Heart right ventricle (tissue), 16 donors: ENCODE measurements at regions of chr9 and their contacts with region 1.

Region 1: DNA sequence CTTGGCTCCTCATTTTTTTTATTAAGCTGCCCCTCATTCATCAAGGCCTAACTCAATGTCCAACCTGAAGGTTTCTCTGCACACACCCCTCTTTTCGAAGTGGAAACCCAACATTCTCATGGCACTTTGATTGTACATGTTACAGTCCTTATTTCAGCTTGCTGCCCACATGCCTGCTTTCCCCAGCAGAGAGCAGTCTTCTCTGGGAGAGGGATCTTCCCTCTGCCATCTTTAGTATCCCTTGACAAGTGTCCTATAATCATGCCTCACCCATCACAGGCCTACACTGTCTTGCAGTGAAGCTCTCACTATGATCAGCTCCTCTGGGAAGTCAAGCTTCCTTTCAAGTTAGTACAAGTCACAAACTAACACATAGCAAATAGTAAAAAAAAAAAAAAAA is 175.1 kb downstream of the ACER2 start:
- DNase-seq: no peak
- ATAC-seq: no peak
- H3K4me3 ChIP-seq: no peak overlapping the region
- H3K27ac ChIP-seq: no peak overlapping the region
- H3K4me1 ChIP-seq: no peaks in the 10 kb centered on the region
- H3K27me3 ChIP-seq: no peaks in the 10 kb centered on the region
- CTCF ChIP-seq: no peak

Region 2: GRCh38 chr9:19184144-19184917 is 399.6 kb before region 1 on chr9:
- intact Hi-C with region 1: no loop called
- DNase-seq: peak; percentile 50 to 71
- ATAC-seq: peak; percentile 88 to 96 (median 94)
- H3K4me3 ChIP-seq: no peak overlapping the region
- H3K27ac ChIP-seq: peak overlapping the region; percentile 50 to 90 (median 84)
- H3K4me1 ChIP-seq: peaks cover 5 to 48% (median 37%) of the 10 kb centered on the region in 9 donors
- H3K27me3 ChIP-seq: no peaks in the 10 kb centered on the region
- CTCF ChIP-seq: no peak

Region 3: GRCh38 chr9:19564396-19565061 is 19.4 kb before region 1 on chr9:
- intact Hi-C with region 1: no loop called
- DNase-seq: no peak
- ATAC-seq: no peak
- H3K4me3 ChIP-seq: no peak overlapping the region
- H3K27ac ChIP-seq: no peak overlapping the region
- H3K4me1 ChIP-seq: no peaks in the 10 kb centered on the region
- H3K27me3 ChIP-seq: no peaks in the 10 kb centered on the region
- CTCF ChIP-seq: no peak

Region 4: GRCh38 chr9:19641046-19641445 is 57.2 kb after region 1 on chr9:
- intact Hi-C with region 1: loop called in 1 of 10 experiments (anchors 10 kb)
- DNase-seq: no peak
- ATAC-seq: no peak
- H3K4me3 ChIP-seq: no peak overlapping the region
- H3K27ac ChIP-seq: no peak overlapping the region
- H3K4me1 ChIP-seq: no peaks in the 10 kb centered on the region
- H3K27me3 ChIP-seq: no peaks in the 10 kb centered on the region
- CTCF ChIP-seq: no peak